ENCODE measurements at regions of chr5 and their contacts with region 1.

Region 1: DNA sequence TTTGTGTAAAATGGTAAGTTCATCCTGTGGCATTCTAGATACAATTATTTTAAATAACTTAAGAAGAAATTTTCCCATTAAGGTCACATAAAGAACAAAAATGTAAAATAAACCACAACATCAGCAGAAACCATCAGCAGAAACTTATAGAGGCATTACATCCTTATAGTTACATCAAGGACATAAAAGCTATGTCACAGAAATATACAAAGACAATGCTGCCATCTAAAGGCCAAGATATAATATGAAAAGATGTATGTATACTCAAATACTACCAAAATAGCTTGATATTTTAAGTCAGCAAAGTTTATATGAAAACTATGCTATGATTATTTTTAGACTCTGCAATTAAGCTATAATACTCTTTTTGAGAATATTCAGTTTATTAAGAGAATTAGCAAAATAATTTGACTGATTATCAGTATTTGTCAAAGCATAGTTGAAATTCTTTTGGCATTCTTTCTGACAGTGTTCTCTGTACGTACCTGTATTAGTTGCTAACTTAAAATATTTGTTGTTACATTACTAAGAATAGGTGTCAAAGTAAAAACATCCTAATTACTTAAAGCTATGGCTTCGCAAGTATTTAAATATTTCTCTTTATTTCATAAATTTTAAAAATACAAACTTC is 36.2 kb downstream of the FBXL17 start:
- DNase-seq: peak; percentile 77
- ATAC-seq: peak; percentile 88
- H3K4me3 ChIP-seq: no peak overlapping the region
- H3K27ac ChIP-seq: no peak overlapping the region
- H3K4me1 ChIP-seq: no peaks in the 10 kb centered on the region
- H3K27me3 ChIP-seq: no peaks in the 10 kb centered on the region
- CTCF ChIP-seq: peak; percentile 87

Region 2: DNA sequence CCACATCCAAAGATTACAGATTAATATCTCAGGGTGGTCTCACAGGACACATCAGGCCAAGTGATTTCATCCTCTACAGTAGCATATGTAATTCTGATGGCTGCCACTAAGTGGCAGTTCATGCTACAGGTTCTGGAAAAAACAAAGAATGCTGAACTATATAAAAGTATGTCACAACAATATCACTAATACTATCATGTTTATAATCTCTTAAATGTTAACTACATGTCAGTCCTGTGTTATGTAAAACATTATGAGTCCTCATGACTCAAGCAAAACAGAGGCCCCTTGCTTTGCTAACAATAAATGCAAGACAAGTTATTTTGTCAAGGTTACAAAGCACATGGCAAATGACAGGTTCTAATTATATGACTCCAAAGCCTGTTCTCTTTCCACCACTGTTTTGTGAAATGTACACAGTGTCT is 196.9 kb before region 1 on chr5:
- CTCF ChIA-PET with region 1: no interaction called
- POLR2A ChIA-PET with region 1: no interaction called
- intact Hi-C with region 1: loop called (anchors 1 kb)
- DNase-seq: peak; percentile 59
- ATAC-seq: peak; percentile 90
- H3K4me3 ChIP-seq: no peak overlapping the region
- H3K27ac ChIP-seq: no peak overlapping the region
- H3K4me1 ChIP-seq: no peaks in the 10 kb centered on the region
- H3K27me3 ChIP-seq: no peaks in the 10 kb centered on the region
- CTCF ChIP-seq: peak; percentile 86

Region 3: GRCh38 chr5:108295578-108296368 is 49.9 kb before region 1 on chr5:
- CTCF ChIA-PET with region 1: interaction called, 4 read pairs
- POLR2A ChIA-PET with region 1: no interaction called
- intact Hi-C with region 1: loop called (anchors 1 kb)
- DNase-seq: peak; percentile 55
- ATAC-seq: peak; percentile 80
- H3K4me3 ChIP-seq: no peak overlapping the region
- H3K27ac ChIP-seq: peak overlapping the region; percentile 27
- H3K4me1 ChIP-seq: peaks cover 17% of the 10 kb centered on the region
- H3K27me3 ChIP-seq: no peaks in the 10 kb centered on the region
- CTCF ChIP-seq: no peak